ENCODE measurements at regions of chr5 and their contacts with region 1.

Region 1: DNA sequence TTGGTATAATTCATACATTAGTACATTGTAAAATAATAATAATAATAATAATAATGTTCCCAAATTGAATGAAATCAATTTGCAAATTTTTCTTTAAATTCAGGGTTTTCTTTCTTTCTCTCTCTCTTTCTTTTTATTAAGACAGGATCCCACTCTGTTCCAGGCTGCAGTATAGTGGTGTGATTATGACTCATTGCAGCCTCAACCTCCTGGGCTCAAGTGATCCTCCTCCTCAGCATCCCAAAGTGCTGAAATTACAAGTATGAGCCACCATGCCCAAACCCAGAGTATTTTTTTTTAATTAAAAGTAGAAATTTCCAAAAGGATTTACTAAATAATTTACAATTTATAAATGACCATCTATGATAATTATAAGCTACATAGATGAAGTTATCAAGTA is 117.7 kb downstream of the HOMER1 start:
- DNase-seq: no peak
- ATAC-seq: no peak
- H3K4me3 ChIP-seq: no peak overlapping the region
- H3K4me3 Mint-ChIP-seq: no peak overlapping the region
- H3K27ac ChIP-seq: no peak overlapping the region
- H3K27ac Mint-ChIP-seq: no peak overlapping the region
- H3K4me1 ChIP-seq: no peaks in the 10 kb centered on the region
- H3K4me1 Mint-ChIP-seq: no peaks in the 10 kb centered on the region
- H3K27me3 ChIP-seq: no peaks in the 10 kb centered on the region
- H3K27me3 Mint-ChIP-seq: no peaks in the 10 kb centered on the region

Region 2: GRCh38 chr5:79235634-79236363 is 160.5 kb before region 1 on chr5 and contains the start of gene JMY:
- CTCF ChIA-PET with region 1: no interaction called
- POLR2A ChIA-PET with region 1: no interaction called
- DNase-seq: peak; percentile 69 to 92 (median 85)
- ATAC-seq: peak; percentile 88 to 91 (median 89)
- H3K4me3 ChIP-seq: peak within 1 kb of the TSS; percentile 75 to 94
- H3K4me3 Mint-ChIP-seq: peak within 1 kb of the TSS; percentile 91 to 96 (median 96)
- H3K27ac ChIP-seq: peak within 1 kb of the TSS; percentile 85
- H3K27ac Mint-ChIP-seq: peak within 1 kb of the TSS; percentile 90 to 92
- H3K4me1 ChIP-seq: peaks cover 16 to 22% of the 10 kb centered on the region in 2 experiments
- H3K4me1 Mint-ChIP-seq: peaks cover 26 to 35% (median 27%) of the 10 kb centered on the region in 3 donors
- H3K27me3 ChIP-seq: no peaks in the 10 kb centered on the region
- H3K27me3 Mint-ChIP-seq: no peaks in the 10 kb centered on the region
- total RNA-seq, gene JMY: 18.0 to 45.3 (median 21.1) TPM

Region 3: DNA sequence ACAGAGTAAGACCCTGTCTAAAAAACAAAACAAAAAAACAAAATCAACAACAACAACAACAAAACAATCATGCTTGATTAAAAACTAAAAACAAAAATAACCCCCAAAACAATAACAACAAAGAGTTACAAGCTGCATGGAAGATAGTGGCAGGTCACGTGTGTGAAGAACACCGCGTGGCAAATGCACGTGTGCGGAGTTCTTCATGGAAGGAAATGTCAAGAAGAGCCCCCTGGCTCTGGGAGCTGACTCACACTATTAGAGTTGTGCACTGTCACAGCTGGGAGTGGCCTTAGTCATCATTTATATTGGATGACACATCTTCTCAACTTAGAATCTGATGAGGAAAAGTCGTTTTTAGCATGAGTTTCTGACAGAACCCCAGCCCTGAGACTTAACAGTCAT is 49.8 kb before region 1 on chr5:
- CTCF ChIA-PET with region 1: no interaction called
- POLR2A ChIA-PET with region 1: no interaction called
- DNase-seq: no peak
- ATAC-seq: no peak
- H3K4me3 ChIP-seq: no peak overlapping the region
- H3K4me3 Mint-ChIP-seq: no peak overlapping the region
- H3K27ac ChIP-seq: no peak overlapping the region
- H3K27ac Mint-ChIP-seq: no peak overlapping the region
- H3K4me1 ChIP-seq: no peaks in the 10 kb centered on the region
- H3K4me1 Mint-ChIP-seq: no peaks in the 10 kb centered on the region
- H3K27me3 ChIP-seq: peaks cover 0 to 15% of the 10 kb centered on the region in 2 experiments
- H3K27me3 Mint-ChIP-seq: peaks cover 0 to 6% of the 10 kb centered on the region in 2 donors

Region 4: DNA sequence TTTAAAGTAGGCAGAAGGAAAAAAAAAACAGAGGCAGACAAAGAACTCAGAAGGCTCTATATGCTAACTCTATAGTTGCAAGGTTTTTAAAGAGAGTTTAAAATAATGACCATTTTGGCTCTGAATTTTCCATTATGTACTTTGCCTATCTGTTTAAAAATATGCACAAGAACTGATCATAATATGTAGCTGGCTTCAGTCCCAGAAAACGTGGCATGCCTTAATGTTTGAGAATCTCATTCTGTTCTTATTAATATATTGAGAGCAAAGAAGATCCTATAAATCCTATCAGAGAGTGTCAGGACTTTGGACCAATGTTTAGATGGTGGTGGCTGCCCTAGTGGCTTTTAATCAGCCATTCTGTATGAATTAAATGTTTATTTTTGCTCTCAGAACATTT is 38.9 kb before region 1 on chr5:
- CTCF ChIA-PET with region 1: interaction called in 1 of 2 experiments, 8 read pairs
- POLR2A ChIA-PET with region 1: interaction called in 1 of 2 experiments, 10 read pairs
- DNase-seq: no peak
- ATAC-seq: no peak
- H3K4me3 ChIP-seq: no peak overlapping the region
- H3K4me3 Mint-ChIP-seq: no peak overlapping the region
- H3K27ac ChIP-seq: no peak overlapping the region
- H3K27ac Mint-ChIP-seq: no peak overlapping the region
- H3K4me1 ChIP-seq: no peaks in the 10 kb centered on the region
- H3K4me1 Mint-ChIP-seq: no peaks in the 10 kb centered on the region
- H3K27me3 ChIP-seq: peaks cover 0 to 6% of the 10 kb centered on the region in 2 experiments
- H3K27me3 Mint-ChIP-seq: peaks cover 5 to 7% of the 10 kb centered on the region in 2 donors

Region 5: DNA sequence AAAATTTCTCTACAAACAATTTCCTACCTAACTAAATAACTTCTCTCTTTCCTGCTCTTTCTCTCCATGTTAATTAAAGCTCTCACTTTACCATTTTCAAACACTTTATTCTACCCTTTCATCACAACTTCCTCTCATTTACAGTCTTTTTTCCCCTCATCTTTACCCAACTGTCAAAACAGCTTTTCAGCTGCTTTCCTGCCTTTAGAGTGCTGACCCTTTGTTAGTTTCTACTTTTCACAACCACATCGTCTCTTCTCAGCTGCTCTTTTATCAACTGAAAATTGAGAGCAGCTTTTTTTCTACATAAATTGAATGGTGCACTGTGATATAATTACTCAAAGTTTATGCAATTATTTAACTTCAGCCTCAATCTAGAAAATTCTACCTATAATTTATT is 120.7 kb after region 1 on chr5:
- CTCF ChIA-PET with region 1: no interaction called
- POLR2A ChIA-PET with region 1: interaction called in 1 of 2 experiments, 19 read pairs
- DNase-seq: no peak
- ATAC-seq: no peak
- H3K4me3 ChIP-seq: no peak overlapping the region
- H3K4me3 Mint-ChIP-seq: peak overlapping the region in 2 of 3 donors; percentile 15 to 19
- H3K27ac ChIP-seq: no peak overlapping the region
- H3K27ac Mint-ChIP-seq: peak overlapping the region; percentile 24 to 43
- H3K4me1 ChIP-seq: peaks cover 15 to 25% of the 10 kb centered on the region in 2 experiments
- H3K4me1 Mint-ChIP-seq: peaks cover 27 to 35% (median 29%) of the 10 kb centered on the region in 3 donors
- H3K27me3 ChIP-seq: peaks cover 7 to 10% of the 10 kb centered on the region in 2 experiments
- H3K27me3 Mint-ChIP-seq: peaks cover 0 to 12% of the 10 kb centered on the region in 2 donors

Measured in T-cell (primary cell).